ENCODE measurements at regions of chr5 and their contacts with region 1.

Region 1: GRCh38 chr5:57635146-57635777 is 152.7 kb upstream of the ACTBL2 start:
- DNase-seq: no peak
- H3K4me3 ChIP-seq: no peak overlapping the region
- H3K27ac ChIP-seq: no peak overlapping the region
- H3K4me1 ChIP-seq: no peaks in the 10 kb centered on the region
- CTCF ChIP-seq: no peak

Region 2: GRCh38 chr5:57621624-57622023 is 13.6 kb before region 1 on chr5:
- CTCF ChIA-PET with region 1: no interaction called
- POLR2A ChIA-PET with region 1: no interaction called
- intact Hi-C with region 1: loop called (anchors 1 kb)
- DNase-seq: no peak
- H3K4me3 ChIP-seq: no peak overlapping the region
- H3K27ac ChIP-seq: no peak overlapping the region
- H3K4me1 ChIP-seq: no peaks in the 10 kb centered on the region
- CTCF ChIP-seq: no peak

Region 3: GRCh38 chr5:57662991-57663390 is 27.7 kb after region 1 on chr5:
- CTCF ChIA-PET with region 1: no interaction called
- POLR2A ChIA-PET with region 1: no interaction called
- intact Hi-C with region 1: no loop called
- DNase-seq: no peak
- H3K4me3 ChIP-seq: no peak overlapping the region
- H3K27ac ChIP-seq: no peak overlapping the region
- H3K4me1 ChIP-seq: no peaks in the 10 kb centered on the region
- CTCF ChIP-seq: no peak

Region 4: DNA sequence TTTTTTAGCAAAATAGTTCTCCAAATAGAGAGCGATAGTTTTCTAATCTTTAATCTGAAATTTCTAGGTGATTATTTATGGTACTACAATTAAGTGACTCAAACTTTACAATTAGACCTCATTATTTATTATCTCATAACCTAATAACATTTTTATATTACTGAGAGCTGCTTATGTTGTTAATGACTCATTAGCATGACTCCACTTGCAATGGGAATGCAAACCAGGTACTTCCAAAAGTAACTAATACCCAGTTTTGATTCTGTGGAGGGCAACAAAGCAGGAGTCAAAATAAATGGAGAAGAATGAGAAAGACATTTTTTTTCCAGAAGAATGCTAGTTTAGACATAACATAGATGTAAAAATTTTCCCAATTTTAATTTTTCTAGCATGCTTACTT is 358.6 kb after region 1 on chr5:
- CTCF ChIA-PET with region 1: no interaction called
- POLR2A ChIA-PET with region 1: no interaction called
- intact Hi-C with region 1: no loop called
- DNase-seq: no peak
- H3K4me3 ChIP-seq: no peak overlapping the region
- H3K27ac ChIP-seq: no peak overlapping the region
- H3K4me1 ChIP-seq: no peaks in the 10 kb centered on the region
- CTCF ChIP-seq: no peak

Measured in OCI-LY7 (cell line).